HCT116 (cell line): ENCODE measurements at regions of chr11 and their contacts with region 1.

Region 1: GRCh38 chr11:2930704-2931428 is 1.6 kb upstream of the PHLDA2 start:
- DNase-seq: peak; percentile 86
- ATAC-seq: peak; percentile 64
- H3K4me3 ChIP-seq: peak overlapping the region; percentile 61 to 93
- H3K27ac ChIP-seq: peak overlapping the region; percentile 99
- H3K4me1 ChIP-seq: peaks cover 43 to 69% of the 10 kb centered on the region in 2 experiments
- H3K27me3 ChIP-seq: no peaks in the 10 kb centered on the region
- CTCF ChIP-seq: peak in 2 of 3 experiments; percentile 89 to 94; a peak in 4 of 6 replicates
- POLR2A ChIP-seq: no peak
- RAD21 ChIP-seq: no peak

Region 2: DNA sequence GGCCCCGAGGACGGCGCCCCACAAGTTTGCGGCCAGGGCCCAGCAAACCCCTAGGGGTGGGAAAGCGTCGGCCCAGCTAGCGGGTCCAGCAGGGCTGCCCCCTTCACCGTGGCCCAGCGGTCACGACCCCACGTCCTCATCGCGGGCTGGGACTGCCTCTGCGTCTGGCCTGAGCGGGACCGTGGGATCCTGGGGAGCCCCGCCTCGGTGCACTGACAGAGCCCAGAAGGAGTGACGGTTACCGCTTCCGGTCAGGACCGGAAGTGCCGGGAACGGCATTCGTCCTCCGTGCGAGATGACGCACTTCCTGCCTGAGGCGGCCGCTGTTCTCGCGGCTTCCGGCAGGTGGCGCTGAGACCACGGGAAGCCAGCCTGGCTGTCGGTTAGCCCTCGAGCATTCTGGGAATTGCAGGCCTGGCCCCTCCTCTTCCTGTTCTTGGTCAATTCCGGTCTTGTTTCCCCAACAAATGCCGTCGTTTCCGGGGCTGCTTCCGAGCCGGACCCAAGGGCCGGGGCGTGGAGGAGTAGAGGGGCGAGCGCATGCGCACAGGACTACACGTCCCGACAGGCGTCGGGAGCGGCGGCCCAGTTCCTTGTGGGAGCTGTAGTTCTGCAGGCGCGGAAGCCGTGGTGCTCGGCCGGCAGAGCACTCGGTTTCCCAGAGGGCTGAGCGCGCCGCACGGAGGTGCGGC is 530.7 kb before region 1 on chr11 and contains the start of gene TSSC4:
- CTCF ChIA-PET with region 1: no interaction called
- POLR2A ChIA-PET with region 1: no interaction called
- RAD21 ChIA-PET with region 1: no interaction called
- intact Hi-C with region 1: loop called (anchors 1 kb)
- DNase-seq: peak; percentile 100
- ATAC-seq: peak; percentile 85
- H3K4me3 ChIP-seq: peak within 1 kb of the TSS; percentile 100
- H3K27ac ChIP-seq: peak within 1 kb of the TSS; percentile 83
- H3K4me1 ChIP-seq: peaks cover 16 to 27% of the 10 kb centered on the region in 2 experiments
- H3K27me3 ChIP-seq: no peaks in the 10 kb centered on the region
- CTCF ChIP-seq: peak in 2 of 3 experiments; percentile 94 to 96; a peak in 4 of 6 replicates
- POLR2A ChIP-seq: peak; percentile 32
- RAD21 ChIP-seq: no peak
- total RNA-seq, gene TSSC4: 47.1 TPM

Region 3: DNA sequence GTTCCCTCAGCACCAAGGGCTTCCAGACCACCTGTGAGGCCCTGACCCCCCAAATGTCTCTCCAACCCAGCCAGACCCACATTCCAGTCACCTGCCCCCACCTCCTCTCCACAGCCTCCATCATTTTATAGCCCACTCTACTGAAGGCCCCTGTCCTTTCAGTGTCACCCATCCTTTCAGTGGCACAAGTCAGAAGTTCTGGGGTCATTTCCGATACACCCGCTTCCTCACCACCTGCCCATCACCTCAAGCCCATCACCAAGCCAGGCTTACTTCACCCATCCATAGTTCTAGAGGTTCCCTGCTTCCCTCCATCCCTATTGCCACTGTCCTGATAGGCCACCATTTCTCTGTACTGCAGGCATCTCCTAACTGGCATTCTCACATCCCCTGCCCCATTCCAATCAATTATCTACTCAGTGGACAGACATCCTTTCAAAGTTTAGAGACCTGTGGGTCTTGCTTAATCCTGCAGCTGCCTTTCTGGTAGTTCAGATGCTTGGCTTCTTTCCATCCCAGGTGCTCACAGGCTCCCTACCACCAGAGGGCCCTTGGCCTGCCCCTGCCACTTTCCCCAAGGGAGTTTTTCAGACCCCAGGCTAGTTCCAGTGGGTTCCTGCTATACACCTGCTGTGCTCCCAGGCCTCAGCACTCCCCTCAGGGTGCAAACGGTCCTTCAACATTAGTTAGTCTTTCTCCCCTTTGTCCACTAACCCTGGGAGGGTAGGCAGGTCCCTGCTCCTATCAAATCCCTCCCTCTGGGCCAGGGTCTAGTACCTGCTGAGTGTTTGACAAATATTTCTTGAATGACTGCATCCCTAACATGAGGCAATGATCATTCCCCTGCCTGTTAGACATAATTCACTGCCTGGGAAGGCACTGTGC is 238.6 kb before region 1 on chr11:
- CTCF ChIA-PET with region 1: no interaction called
- POLR2A ChIA-PET with region 1: no interaction called
- RAD21 ChIA-PET with region 1: interaction called in 1 of 2 experiments, 3 read pairs
- intact Hi-C with region 1: loop called (anchors 2 kb)
- DNase-seq: no peak
- ATAC-seq: peak; percentile 51; the same call in 1 of the 2 replicates
- H3K4me3 ChIP-seq: no peak overlapping the region
- H3K27ac ChIP-seq: no peak overlapping the region
- H3K4me1 ChIP-seq: no peaks in the 10 kb centered on the region
- H3K27me3 ChIP-seq: no peaks in the 10 kb centered on the region
- CTCF ChIP-seq: peak; percentile 33 to 50 (median 49); a peak in 5 of 6 replicates
- POLR2A ChIP-seq: no peak
- RAD21 ChIP-seq: peak; percentile 48; the same call in 1 of the 2 replicates

Region 4: GRCh38 chr11:2901854-2902783 is 28.7 kb before region 1 on chr11:
- CTCF ChIA-PET with region 1: interaction called, 13 read pairs
- POLR2A ChIA-PET with region 1: interaction called, 21 read pairs
- RAD21 ChIA-PET with region 1: interaction called, 3 read pairs
- intact Hi-C with region 1: no loop called
- DNase-seq: peak; percentile 74
- ATAC-seq: peak; percentile 80
- H3K4me3 ChIP-seq: peak overlapping the region; percentile 70 to 76
- H3K27ac ChIP-seq: peak overlapping the region; percentile 86
- H3K4me1 ChIP-seq: peaks cover 54 to 72% of the 10 kb centered on the region in 2 experiments
- H3K27me3 ChIP-seq: no peaks in the 10 kb centered on the region
- CTCF ChIP-seq: no peak
- POLR2A ChIP-seq: no peak
- RAD21 ChIP-seq: no peak

Region 5: GRCh38 chr11:3091791-3092602 is 161.1 kb after region 1 on chr11:
- CTCF ChIA-PET with region 1: interaction called, 9 read pairs
- POLR2A ChIA-PET with region 1: interaction called, 7 read pairs
- RAD21 ChIA-PET with region 1: interaction called in 1 of 2 experiments, 3 read pairs
- intact Hi-C with region 1: loop called (anchors 1 kb)
- DNase-seq: peak; percentile 67
- ATAC-seq: peak; percentile 94
- H3K4me3 ChIP-seq: no peak overlapping the region
- H3K27ac ChIP-seq: peak overlapping the region; percentile 36; the same call in 1 of the 2 replicates
- H3K4me1 ChIP-seq: peaks cover 2 to 22% of the 10 kb centered on the region in 2 experiments
- H3K27me3 ChIP-seq: no peaks in the 10 kb centered on the region
- CTCF ChIP-seq: peak; percentile 98 to 99 (median 98)
- POLR2A ChIP-seq: no peak
- RAD21 ChIP-seq: peak; percentile 96